ENCODE measurements at regions of chr10 and their contacts with region 1.

Region 1: DNA sequence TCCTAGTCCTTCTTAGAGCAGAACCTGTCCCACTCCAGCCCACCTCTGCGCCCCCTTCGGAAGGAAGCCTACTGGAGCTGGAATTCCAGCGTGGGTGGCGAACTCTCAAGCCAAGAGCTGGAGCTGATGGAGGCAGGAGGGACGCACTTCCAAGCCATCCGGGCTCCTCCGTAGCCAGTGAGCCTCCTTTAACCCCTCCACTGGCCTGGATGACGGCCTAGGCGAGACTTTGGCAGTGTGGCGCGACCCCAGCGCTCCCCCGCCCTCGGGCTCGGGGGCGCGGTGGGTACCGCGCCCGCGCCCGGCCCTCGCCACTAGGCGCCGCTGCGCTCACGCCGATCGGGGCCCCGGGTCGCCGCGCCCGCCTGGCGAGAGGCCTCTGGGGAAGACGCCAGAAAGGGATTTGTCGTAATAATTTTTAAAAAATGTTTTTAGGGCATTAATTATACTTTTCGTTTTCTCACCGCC is 5.1 kb upstream of the EMX2 start:
- DNase-seq: no peak
- ATAC-seq: peak; percentile 80
- H3K4me3 ChIP-seq: no peak overlapping the region
- H3K27ac ChIP-seq: no peak overlapping the region
- H3K4me1 ChIP-seq: peaks cover 7% of the 10 kb centered on the region
- H3K27me3 ChIP-seq: peaks cover 13 to 23% of the 10 kb centered on the region in 2 experiments
- CTCF ChIP-seq: peak; percentile 61 to 71 (median 67); a peak in 5 of 6 replicates
- EP300 ChIP-seq: no peak
- POLR2A ChIP-seq: no peak
- RAD21 ChIP-seq: peak; percentile 88

Region 2: GRCh38 chr10:117455346-117455745 is 82.1 kb before region 1 on chr10:
- CTCF ChIA-PET with region 1: no interaction called
- POLR2A ChIA-PET with region 1: no interaction called
- RAD21 ChIA-PET with region 1: no interaction called
- SMC1A ChIA-PET with region 1: no interaction called
- in situ Hi-C with region 1: no loop called
- intact Hi-C with region 1: no loop called
- DNase-seq: no peak
- ATAC-seq: no peak
- H3K4me3 ChIP-seq: no peak overlapping the region
- H3K27ac ChIP-seq: no peak overlapping the region
- H3K4me1 ChIP-seq: no peaks in the 10 kb centered on the region
- H3K27me3 ChIP-seq: no peaks in the 10 kb centered on the region
- CTCF ChIP-seq: no peak
- EP300 ChIP-seq: no peak
- POLR2A ChIP-seq: no peak
- RAD21 ChIP-seq: no peak

Region 3: GRCh38 chr10:117503244-117504205 is 33.9 kb before region 1 on chr10:
- CTCF ChIA-PET with region 1: interaction called, 31 read pairs
- POLR2A ChIA-PET with region 1: no interaction called
- RAD21 ChIA-PET with region 1: no interaction called
- SMC1A ChIA-PET with region 1: interaction called, 12 read pairs
- in situ Hi-C with region 1: no loop called
- intact Hi-C with region 1: no loop called
- DNase-seq: no peak
- ATAC-seq: peak; percentile 92
- H3K4me3 ChIP-seq: no peak overlapping the region
- H3K27ac ChIP-seq: no peak overlapping the region
- H3K4me1 ChIP-seq: no peaks in the 10 kb centered on the region
- H3K27me3 ChIP-seq: peaks cover 2 to 3% of the 10 kb centered on the region in 2 experiments; a peak in 1 of 4 replicates
- CTCF ChIP-seq: peak in 1 of 3 experiments; percentile 28; a peak in 1 of 6 replicates
- EP300 ChIP-seq: no peak
- POLR2A ChIP-seq: no peak
- RAD21 ChIP-seq: no peak

Region 4: DNA sequence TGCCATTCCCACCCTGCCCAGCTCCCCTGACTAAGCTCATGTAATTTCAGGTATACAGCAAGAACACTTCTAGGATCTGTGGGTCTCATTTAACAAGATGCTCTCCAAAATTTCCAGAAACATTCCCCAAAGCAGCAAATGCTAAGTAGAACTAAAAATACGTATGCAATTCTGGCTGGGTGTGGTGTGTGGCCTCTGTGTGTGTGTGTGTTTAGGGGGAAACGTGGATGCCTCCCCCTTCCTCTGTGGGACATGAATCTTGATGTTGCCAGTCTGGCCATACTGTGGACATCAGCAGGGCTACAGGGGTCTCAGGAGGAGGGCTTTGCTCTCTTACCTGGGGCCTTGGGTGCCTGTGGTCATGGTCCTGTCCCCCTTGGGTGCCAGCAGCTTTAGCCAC is 23.5 kb after region 1 on chr10:
- CTCF ChIA-PET with region 1: interaction called, 3 read pairs
- POLR2A ChIA-PET with region 1: no interaction called
- RAD21 ChIA-PET with region 1: interaction called, 3 read pairs
- SMC1A ChIA-PET with region 1: interaction called, 17 read pairs
- in situ Hi-C with region 1: no loop called
- intact Hi-C with region 1: no loop called
- DNase-seq: no peak
- ATAC-seq: no peak
- H3K4me3 ChIP-seq: no peak overlapping the region
- H3K27ac ChIP-seq: no peak overlapping the region
- H3K4me1 ChIP-seq: no peaks in the 10 kb centered on the region
- H3K27me3 ChIP-seq: peaks cover 0 to 4% of the 10 kb centered on the region in 2 experiments; a peak in 2 of 4 replicates
- CTCF ChIP-seq: no peak
- EP300 ChIP-seq: no peak
- POLR2A ChIP-seq: no peak
- RAD21 ChIP-seq: no peak

Region 5: DNA sequence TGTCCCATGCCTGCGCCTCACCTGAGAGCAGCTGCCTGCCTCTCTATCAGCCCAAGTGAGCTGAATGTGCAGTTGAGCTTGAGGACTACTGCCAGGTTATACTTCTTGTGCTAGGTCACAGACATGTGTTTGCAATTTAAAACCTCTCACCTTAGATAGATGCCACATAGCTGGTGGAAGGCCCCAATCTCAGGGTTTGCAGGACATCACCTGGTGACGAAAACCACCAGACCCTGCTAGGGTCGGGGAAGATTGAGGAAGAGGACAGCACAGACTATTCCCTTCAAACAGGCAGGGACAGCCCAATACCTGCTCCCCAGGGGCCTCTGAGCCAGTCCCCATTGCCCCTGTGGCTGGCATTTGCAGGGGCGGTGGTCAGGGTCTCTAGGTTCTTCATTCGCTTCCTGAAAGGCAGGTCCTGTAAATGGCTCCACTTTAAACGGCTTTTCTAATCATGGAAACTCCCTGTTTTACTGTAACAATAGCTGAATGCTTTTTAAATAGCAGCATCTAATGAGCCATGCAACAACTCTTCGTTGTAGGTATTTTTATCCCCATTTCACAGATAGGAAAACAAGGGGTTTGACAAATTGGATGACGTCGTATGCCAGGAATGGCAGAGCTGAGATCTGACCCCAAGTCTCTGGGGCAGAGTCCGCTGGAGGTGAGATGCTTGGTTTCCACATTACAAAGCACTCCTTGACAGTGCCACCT is 85.2 kb after region 1 on chr10:
- CTCF ChIA-PET with region 1: interaction called, 16 read pairs
- POLR2A ChIA-PET with region 1: no interaction called
- RAD21 ChIA-PET with region 1: interaction called, 14 read pairs
- SMC1A ChIA-PET with region 1: interaction called, 30 read pairs
- in situ Hi-C with region 1: no loop called
- intact Hi-C with region 1: no loop called
- DNase-seq: no peak
- ATAC-seq: peak; percentile 71
- H3K4me3 ChIP-seq: no peak overlapping the region
- H3K27ac ChIP-seq: no peak overlapping the region
- H3K4me1 ChIP-seq: no peaks in the 10 kb centered on the region
- H3K27me3 ChIP-seq: no peaks in the 10 kb centered on the region
- CTCF ChIP-seq: no peak
- EP300 ChIP-seq: peak in 1 of 2 experiments; percentile 20; a peak in 2 of 4 replicates
- POLR2A ChIP-seq: no peak
- RAD21 ChIP-seq: no peak

Region 6: DNA sequence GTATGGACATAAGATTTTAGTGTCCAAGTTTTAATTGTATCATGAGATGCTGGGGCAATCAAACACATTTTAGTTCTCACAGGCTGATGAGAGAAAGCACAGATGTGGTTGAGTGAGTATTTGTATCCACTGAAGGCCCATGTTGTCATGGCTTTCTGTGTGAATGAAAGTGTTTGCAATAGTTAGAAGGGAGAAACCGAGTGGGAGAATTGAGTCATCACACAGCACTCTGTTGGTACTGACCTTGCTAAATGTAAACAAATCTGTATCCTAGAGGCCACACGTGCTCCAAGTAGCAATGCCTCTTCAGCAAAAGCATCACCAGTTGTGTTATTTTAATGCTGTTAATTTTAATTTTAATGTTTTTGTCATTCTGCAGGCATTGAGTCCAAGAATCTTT is 126.3 kb after region 1 on chr10:
- CTCF ChIA-PET with region 1: interaction called, 4 read pairs
- POLR2A ChIA-PET with region 1: no interaction called
- RAD21 ChIA-PET with region 1: interaction called, 3 read pairs
- SMC1A ChIA-PET with region 1: interaction called, 12 read pairs
- in situ Hi-C with region 1: no loop called
- intact Hi-C with region 1: loop called (anchors 10 kb)
- DNase-seq: peak; percentile 83
- ATAC-seq: peak; percentile 99
- H3K4me3 ChIP-seq: no peak overlapping the region
- H3K27ac ChIP-seq: no peak overlapping the region; the same call in 1 of the 2 replicates
- H3K4me1 ChIP-seq: peaks cover 8% of the 10 kb centered on the region
- H3K27me3 ChIP-seq: no peaks in the 10 kb centered on the region
- CTCF ChIP-seq: no peak
- EP300 ChIP-seq: peak; percentile 89 to 99
- POLR2A ChIP-seq: no peak
- RAD21 ChIP-seq: peak; percentile 18; the same call in 1 of the 2 replicates

Region 7: GRCh38 chr10:117757086-117757720 is 219.7 kb after region 1 on chr10:
- CTCF ChIA-PET with region 1: interaction called, 5 read pairs
- POLR2A ChIA-PET with region 1: no interaction called
- RAD21 ChIA-PET with region 1: interaction called, 7 read pairs
- SMC1A ChIA-PET with region 1: interaction called, 5 read pairs
- in situ Hi-C with region 1: no loop called
- intact Hi-C with region 1: loop called (anchors 2 kb)
- DNase-seq: no peak
- ATAC-seq: no peak
- H3K4me3 ChIP-seq: no peak overlapping the region
- H3K27ac ChIP-seq: no peak overlapping the region
- H3K4me1 ChIP-seq: no peaks in the 10 kb centered on the region
- H3K27me3 ChIP-seq: peaks cover 0 to 5% of the 10 kb centered on the region in 2 experiments; a peak in 2 of 4 replicates
- CTCF ChIP-seq: no peak
- EP300 ChIP-seq: no peak
- POLR2A ChIP-seq: no peak
- RAD21 ChIP-seq: no peak

Region 8: GRCh38 chr10:118036281-118036875 is 498.9 kb after region 1 on chr10:
- CTCF ChIA-PET with region 1: no interaction called
- POLR2A ChIA-PET with region 1: no interaction called
- RAD21 ChIA-PET with region 1: no interaction called
- SMC1A ChIA-PET with region 1: no interaction called
- in situ Hi-C with region 1: no loop called
- intact Hi-C with region 1: no loop called
- DNase-seq: no peak
- ATAC-seq: no peak
- H3K4me3 ChIP-seq: no peak overlapping the region
- H3K27ac ChIP-seq: no peak overlapping the region
- H3K4me1 ChIP-seq: no peaks in the 10 kb centered on the region
- H3K27me3 ChIP-seq: no peaks in the 10 kb centered on the region
- CTCF ChIP-seq: no peak
- EP300 ChIP-seq: no peak
- POLR2A ChIP-seq: no peak
- RAD21 ChIP-seq: no peak

Region 9: GRCh38 chr10:118241229-118242137 is 704.0 kb after region 1 on chr10:
- CTCF ChIA-PET with region 1: interaction called, 21 read pairs
- POLR2A ChIA-PET with region 1: no interaction called
- RAD21 ChIA-PET with region 1: interaction called, 4 read pairs
- SMC1A ChIA-PET with region 1: interaction called, 23 read pairs
- in situ Hi-C with region 1: no loop called
- intact Hi-C with region 1: loop called (anchors 2 kb)
- DNase-seq: peak; percentile 16
- ATAC-seq: peak; percentile 63
- H3K4me3 ChIP-seq: no peak overlapping the region
- H3K27ac ChIP-seq: no peak overlapping the region
- H3K4me1 ChIP-seq: no peaks in the 10 kb centered on the region
- H3K27me3 ChIP-seq: peaks cover 0 to 3% of the 10 kb centered on the region in 2 experiments; a peak in 1 of 4 replicates
- CTCF ChIP-seq: peak; percentile 88 to 95 (median 88); a peak in 5 of 6 replicates
- EP300 ChIP-seq: no peak
- POLR2A ChIP-seq: no peak
- RAD21 ChIP-seq: peak; percentile 86